Breast epithelium (tissue), 4 donors: ENCODE measurements at regions of chr5 and their contacts with region 1.

Region 1: GRCh38 chr5:31898036-31898632 is 259.2 kb downstream of the PDZD2 start:
- DNase-seq: no peak
- H3K4me3 ChIP-seq: no peak overlapping the region
- H3K27ac ChIP-seq: no peak overlapping the region
- H3K4me1 ChIP-seq: no peaks in the 10 kb centered on the region
- H3K27me3 ChIP-seq: no peaks in the 10 kb centered on the region
- CTCF ChIP-seq: no peak
- POLR2A ChIP-seq: no peak

Region 2: DNA sequence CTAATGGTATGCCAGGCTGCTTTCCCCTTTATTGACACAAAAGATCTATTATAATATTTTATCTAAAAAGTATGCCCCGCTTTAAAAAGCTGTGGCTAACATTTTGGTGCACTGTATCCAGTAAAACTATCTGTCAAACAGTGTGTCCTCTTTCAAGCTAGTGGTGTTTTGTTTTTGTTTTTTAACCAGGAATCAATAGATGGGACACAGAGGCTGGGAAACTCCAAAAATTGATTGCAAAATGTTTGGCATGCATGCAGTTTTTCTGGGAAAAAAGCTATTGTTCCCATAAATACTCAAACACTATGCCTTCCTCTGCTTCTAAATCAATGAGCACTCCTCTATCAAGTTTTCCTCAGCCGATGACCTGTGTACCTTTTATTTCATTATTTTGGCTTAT is 293.5 kb before region 1 on chr5:
- intact Hi-C with region 1: loop called (anchors 5 kb)
- DNase-seq: no peak
- H3K4me3 ChIP-seq: no peak overlapping the region
- H3K27ac ChIP-seq: no peak overlapping the region
- H3K4me1 ChIP-seq: no peaks in the 10 kb centered on the region
- H3K27me3 ChIP-seq: no peaks in the 10 kb centered on the region
- CTCF ChIP-seq: no peak
- POLR2A ChIP-seq: no peak

Region 3: DNA sequence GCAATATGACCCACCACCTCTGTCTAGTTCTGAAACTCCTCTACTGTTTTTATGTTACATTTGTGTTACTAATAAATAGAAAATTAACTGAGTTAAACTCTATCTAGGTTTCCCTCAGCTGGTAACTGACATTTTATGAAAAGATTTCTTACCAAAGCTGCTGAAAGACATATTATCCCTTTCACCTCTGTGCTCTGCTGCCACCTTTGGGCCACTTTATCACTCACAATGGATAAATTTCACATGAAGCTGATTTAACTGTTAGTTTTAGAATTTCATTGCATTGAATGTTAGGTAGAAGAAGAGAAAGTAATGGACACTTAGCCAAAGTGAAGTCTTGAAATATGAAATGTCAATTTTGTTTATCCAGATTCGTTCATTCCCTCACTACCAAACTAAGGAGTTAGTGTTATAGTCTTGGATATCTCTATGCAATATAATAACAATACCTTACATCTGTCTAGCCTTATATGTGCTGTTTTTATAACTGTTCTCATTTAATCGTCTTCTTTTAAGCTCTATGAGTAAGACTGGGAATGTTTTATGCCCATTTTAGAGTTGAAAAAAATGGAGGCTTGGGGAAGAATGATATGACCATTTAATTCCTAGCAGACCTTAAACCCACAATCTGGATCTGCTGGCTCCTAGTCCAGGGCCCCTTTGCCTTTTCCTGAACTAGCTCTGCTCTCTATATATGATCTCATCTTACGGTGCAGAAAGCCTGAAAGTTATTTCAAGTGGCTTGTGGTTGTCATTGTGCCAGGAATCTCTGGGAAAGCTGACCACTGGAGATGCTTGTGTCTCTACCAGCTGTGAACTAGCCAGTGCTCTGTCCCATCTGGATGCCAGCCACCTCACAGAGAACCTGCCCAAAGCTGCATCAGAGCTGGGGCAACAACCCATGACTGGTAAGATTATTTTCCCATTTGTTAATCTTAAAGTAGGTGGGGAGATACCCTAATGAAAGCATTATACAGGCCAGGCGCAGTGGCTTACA is 178.9 kb after region 1 on chr5:
- intact Hi-C with region 1: no loop called
- DNase-seq: no peak
- H3K4me3 ChIP-seq: no peak overlapping the region
- H3K27ac ChIP-seq: no peak overlapping the region
- H3K4me1 ChIP-seq: no peaks in the 10 kb centered on the region
- H3K27me3 ChIP-seq: no peaks in the 10 kb centered on the region
- CTCF ChIP-seq: peak; percentile 33 to 79 (median 66)
- POLR2A ChIP-seq: no peak